ENCODE measurements at regions of chr7 and their contacts with region 1.

Region 1: DNA sequence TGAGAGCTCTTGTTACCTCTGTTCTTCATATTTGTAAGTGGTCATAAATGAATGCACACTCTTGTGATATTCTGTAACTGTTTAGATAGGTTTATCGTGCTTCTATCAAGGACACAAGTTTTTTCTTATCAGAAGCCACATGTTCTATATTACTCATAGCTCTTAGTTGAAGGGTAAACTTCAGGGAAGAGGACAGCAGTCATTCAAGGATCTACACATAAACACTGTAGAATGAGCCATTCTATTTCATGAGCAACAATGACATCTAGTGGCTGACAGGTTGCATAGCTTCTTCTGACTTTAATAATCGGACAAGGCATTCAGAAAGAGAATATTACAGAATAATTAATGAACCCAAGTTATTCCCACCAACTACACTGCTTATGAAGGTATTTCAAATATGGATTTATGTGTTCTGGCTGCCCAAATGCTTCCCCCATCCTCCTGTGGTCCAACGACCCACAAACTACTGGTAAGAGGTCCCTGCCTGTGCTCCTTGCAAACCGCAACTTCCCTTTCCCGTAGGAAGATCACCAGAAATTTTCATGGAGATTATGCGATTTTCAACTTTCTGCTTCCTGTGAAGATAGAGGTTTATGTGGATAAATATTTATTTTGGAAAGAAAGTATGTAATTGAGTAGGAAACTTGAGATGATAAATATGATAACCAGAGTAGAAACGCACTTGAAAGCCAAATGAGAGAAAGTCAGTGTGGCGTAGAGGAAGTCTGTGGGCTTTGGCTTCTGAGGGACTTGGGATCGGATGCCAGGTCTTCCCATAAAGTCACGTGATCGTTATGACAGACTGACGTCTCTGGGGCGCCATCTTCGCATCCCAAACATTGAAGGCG is 16.8 kb upstream of the ABCB5 start:
- DNase-seq: no peak
- ATAC-seq: peak; percentile 72
- H3K4me3 Mint-ChIP-seq: no peak overlapping the region
- H3K27ac Mint-ChIP-seq: no peak overlapping the region
- H3K4me1 Mint-ChIP-seq: no peaks in the 10 kb centered on the region
- H3K27me3 Mint-ChIP-seq: peaks cover 6% of the 10 kb centered on the region
- CTCF ChIP-seq: peak; percentile 80

Region 2: GRCh38 chr7:19708397-19709248 is 890.1 kb before region 1 on chr7 and contains the start of gene POLR1F:
- CTCF ChIA-PET with region 1: interaction called, 105 read pairs
- POLR2A ChIA-PET with region 1: no interaction called
- intact Hi-C with region 1: loop called (anchors 2 kb)
- DNase-seq: peak; percentile 96
- ATAC-seq: peak; percentile 99
- H3K4me3 Mint-ChIP-seq: peak within 1 kb of the TSS; percentile 98
- H3K27ac Mint-ChIP-seq: peak within 1 kb of the TSS; percentile 90
- H3K4me1 Mint-ChIP-seq: peaks cover 48% of the 10 kb centered on the region
- H3K27me3 Mint-ChIP-seq: no peaks in the 10 kb centered on the region
- CTCF ChIP-seq: peak; percentile 86
- total RNA-seq, gene POLR1F: 27.8 to 34.7 TPM

Region 3: GRCh38 chr7:19713676-19714075 is 885.0 kb before region 1 on chr7:
- CTCF ChIA-PET with region 1: interaction called, 105 read pairs
- POLR2A ChIA-PET with region 1: no interaction called
- intact Hi-C with region 1: loop called (anchors 2 kb)
- DNase-seq: peak; percentile 65
- ATAC-seq: no peak
- H3K4me3 Mint-ChIP-seq: no peak overlapping the region
- H3K27ac Mint-ChIP-seq: no peak overlapping the region
- H3K4me1 Mint-ChIP-seq: peaks cover 12% of the 10 kb centered on the region
- H3K27me3 Mint-ChIP-seq: peaks cover 1% of the 10 kb centered on the region
- CTCF ChIP-seq: peak; percentile 60

Region 4: GRCh38 chr7:19754521-19755116 is 844.1 kb before region 1 on chr7:
- CTCF ChIA-PET with region 1: interaction called, 6 read pairs
- POLR2A ChIA-PET with region 1: no interaction called
- intact Hi-C with region 1: loop called (anchors 2 kb)
- DNase-seq: no peak
- ATAC-seq: no peak
- H3K4me3 Mint-ChIP-seq: no peak overlapping the region
- H3K27ac Mint-ChIP-seq: no peak overlapping the region
- H3K4me1 Mint-ChIP-seq: no peaks in the 10 kb centered on the region
- H3K27me3 Mint-ChIP-seq: no peaks in the 10 kb centered on the region
- CTCF ChIP-seq: peak; percentile 76

Measured in activated CD8-positive, alpha-beta T cell treated with anti-CD3 and anti-CD28 coated beads for 36 hours (primary cell).